ENCODE measurements at regions of chr12 and their contacts with region 1.

Region 1: DNA sequence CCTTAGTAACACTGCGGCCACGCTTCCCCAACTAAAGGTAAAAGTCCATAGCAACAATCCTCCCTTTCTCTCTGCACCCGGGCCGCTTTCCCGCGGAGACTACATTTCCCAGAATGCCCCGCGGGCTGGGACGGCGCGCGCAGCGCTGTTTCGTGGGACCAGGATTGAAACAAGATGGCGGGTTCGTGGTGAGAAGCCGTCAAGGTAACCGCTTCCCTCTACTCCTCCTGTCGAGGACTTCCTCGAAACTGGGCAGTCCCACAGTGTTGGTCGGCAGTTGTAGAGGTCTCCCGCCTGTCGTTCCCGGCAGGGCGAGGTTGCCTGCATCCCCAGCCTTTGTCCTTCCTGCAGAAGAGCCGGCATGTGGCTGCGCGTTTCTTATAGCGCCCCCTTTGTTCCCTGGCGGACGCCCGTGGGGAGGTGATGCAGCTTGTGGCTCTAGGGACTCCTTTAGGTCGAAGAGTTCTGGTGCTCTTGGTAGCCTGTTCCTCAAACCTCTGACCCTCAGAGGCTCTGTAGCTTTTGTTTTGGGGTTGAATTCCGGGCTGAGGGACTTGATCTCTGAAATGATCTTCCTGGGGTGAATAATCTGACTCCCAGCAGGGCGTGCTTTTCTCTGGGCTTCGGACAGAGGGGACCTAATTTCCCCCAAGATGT is at the start of gene MRPL42:
- DNase-seq: peak; percentile 34
- H3K4me3 ChIP-seq: peak within 1 kb of the TSS; percentile 96
- CTCF ChIP-seq: peak; percentile 84

Region 2: GRCh38 chr12:93098077-93098476 is 369.4 kb before region 1 on chr12:
- CTCF ChIA-PET with region 1: no interaction called
- POLR2A ChIA-PET with region 1: no interaction called
- DNase-seq: no peak
- H3K4me3 ChIP-seq: no peak overlapping the region
- CTCF ChIP-seq: peak; percentile 11

Region 3: GRCh38 chr12:93441617-93442410 is 25.7 kb before region 1 on chr12 and contains the start of gene UBE2N:
- CTCF ChIA-PET with region 1: interaction called, 14 read pairs
- POLR2A ChIA-PET with region 1: no interaction called
- DNase-seq: peak; percentile 47
- H3K4me3 ChIP-seq: peak within 1 kb of the TSS; percentile 79
- CTCF ChIP-seq: no peak

Region 4: GRCh38 chr12:93456077-93456476 is 11.4 kb before region 1 on chr12:
- CTCF ChIA-PET with region 1: interaction called, 10 read pairs
- POLR2A ChIA-PET with region 1: no interaction called
- DNase-seq: no peak
- H3K4me3 ChIP-seq: no peak overlapping the region
- CTCF ChIP-seq: no peak

Region 5: GRCh38 chr12:93484315-93484981 is 17.0 kb after region 1 on chr12:
- CTCF ChIA-PET with region 1: interaction called, 13 read pairs
- POLR2A ChIA-PET with region 1: no interaction called
- DNase-seq: no peak
- H3K4me3 ChIP-seq: no peak overlapping the region
- CTCF ChIP-seq: no peak